Activated naive CD8-positive, alpha-beta T cell treated with anti-CD3 and anti-CD28 coated beads, Interleukin-2, amount 10 ng/mL, durations not matched to agents 7 days and 5 days (primary cell): ENCODE measurements at regions of chr3 and their contacts with region 1.

Region 1: DNA sequence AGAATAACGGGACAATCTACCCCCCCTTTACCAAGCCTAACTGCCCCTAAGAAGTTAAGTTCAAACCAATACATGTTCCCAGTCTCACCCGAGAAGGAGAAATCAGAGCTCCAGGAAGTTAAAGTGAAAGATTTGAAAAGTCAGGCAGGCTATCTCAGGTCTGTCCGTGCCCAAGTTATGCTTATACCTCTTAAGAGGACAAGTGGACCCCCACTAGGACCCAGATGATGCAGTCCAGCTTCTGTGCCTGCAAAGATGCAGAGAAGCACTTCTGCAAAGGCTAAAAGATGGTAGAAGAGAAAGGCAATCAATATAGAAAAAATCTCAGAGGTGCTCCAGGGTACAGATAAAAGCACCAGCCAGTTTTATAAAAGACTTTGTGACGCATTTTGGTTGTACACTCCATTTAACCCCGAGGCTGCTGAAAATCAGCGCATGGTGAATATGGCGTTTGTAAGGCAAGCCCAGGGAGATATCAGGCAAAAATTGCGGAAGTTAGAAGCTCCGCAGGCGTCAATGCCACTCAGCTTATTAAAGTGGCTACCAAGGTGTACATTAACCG is 9.8 kb upstream of the SLC9C1 start:
- DNase-seq: no peak
- ATAC-seq: peak; percentile 51
- H3K4me3 Mint-ChIP-seq: no peak overlapping the region
- H3K27ac Mint-ChIP-seq: no peak overlapping the region
- H3K4me1 Mint-ChIP-seq: peaks cover under 1% of the 10 kb centered on the region
- H3K27me3 Mint-ChIP-seq: no peaks in the 10 kb centered on the region

Region 2: DNA sequence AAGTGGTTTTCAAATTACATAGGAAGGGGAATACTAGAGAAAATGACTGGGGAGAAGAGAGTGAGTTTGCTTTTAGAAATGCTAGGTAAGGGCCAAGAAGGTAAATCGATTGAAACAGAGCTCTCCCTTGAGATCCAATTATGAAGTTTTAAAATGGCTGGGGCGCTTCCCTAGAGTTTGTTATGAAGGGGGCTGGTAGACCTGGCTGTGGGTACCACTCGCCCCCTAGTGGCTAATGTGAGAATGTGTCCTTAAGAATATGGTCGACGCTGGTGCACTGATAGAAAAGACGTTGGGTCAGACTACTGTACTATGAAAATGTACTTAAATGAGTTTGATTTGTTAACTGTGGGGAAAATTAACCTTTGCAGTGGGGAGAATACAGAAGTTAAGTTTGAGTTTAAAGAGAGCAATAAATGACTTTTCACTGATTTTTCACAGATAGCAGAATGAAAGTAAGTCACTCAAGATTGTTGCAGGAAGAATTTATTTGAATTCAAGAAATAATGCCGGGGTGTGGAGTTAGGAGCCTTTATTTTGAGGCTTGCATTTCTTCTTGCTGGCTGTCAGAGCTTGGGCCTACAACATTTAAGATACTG is 260.1 kb before region 1 on chr3:
- POLR2A ChIA-PET with region 1: no interaction called
- DNase-seq: peak; percentile 30
- ATAC-seq: peak; percentile 92
- H3K4me3 Mint-ChIP-seq: no peak overlapping the region
- H3K27ac Mint-ChIP-seq: no peak overlapping the region
- H3K4me1 Mint-ChIP-seq: peaks cover 5% of the 10 kb centered on the region
- H3K27me3 Mint-ChIP-seq: no peaks in the 10 kb centered on the region

Region 3: DNA sequence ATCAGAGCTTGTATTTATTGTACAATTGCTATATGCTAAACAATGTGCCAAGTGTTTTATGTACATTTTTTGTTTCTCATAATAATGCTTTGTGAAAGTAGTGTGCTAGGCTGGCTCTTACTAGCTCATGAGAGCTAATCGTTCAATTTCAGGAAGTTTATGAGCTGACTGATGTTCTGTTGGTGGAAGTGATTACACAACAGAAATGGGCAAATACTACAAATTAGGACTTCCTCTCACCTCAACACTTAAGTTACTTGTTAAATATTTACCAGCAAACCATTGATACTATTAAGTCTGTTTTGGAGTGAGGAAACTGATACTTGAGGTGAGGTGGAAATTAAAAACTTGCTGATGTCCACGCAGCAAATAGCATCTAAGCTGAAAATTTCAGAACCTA is 42.1 kb before region 1 on chr3:
- POLR2A ChIA-PET with region 1: no interaction called
- DNase-seq: no peak
- ATAC-seq: no peak
- H3K4me3 Mint-ChIP-seq: no peak overlapping the region
- H3K27ac Mint-ChIP-seq: no peak overlapping the region
- H3K4me1 Mint-ChIP-seq: no peaks in the 10 kb centered on the region
- H3K27me3 Mint-ChIP-seq: peaks cover 3% of the 10 kb centered on the region

Region 4: GRCh38 chr3:112293368-112294321 is 10.2 kb before region 1 on chr3 and contains the start of gene SLC9C1:
- POLR2A ChIA-PET with region 1: interaction called, 11 read pairs
- DNase-seq: no peak
- ATAC-seq: peak; percentile 79
- H3K4me3 Mint-ChIP-seq: peak within 1 kb of the TSS; percentile 71
- H3K27ac Mint-ChIP-seq: peak within 1 kb of the TSS; percentile 75
- H3K4me1 Mint-ChIP-seq: peaks cover 24% of the 10 kb centered on the region
- H3K27me3 Mint-ChIP-seq: no peaks in the 10 kb centered on the region
- total RNA-seq, gene SLC9C1: not detected

Region 5: GRCh38 chr3:112327371-112327951 is 23.6 kb after region 1 on chr3:
- POLR2A ChIA-PET with region 1: no interaction called
- DNase-seq: no peak
- ATAC-seq: peak; percentile 97
- H3K4me3 Mint-ChIP-seq: no peak overlapping the region
- H3K27ac Mint-ChIP-seq: no peak overlapping the region
- H3K4me1 Mint-ChIP-seq: peaks cover 1% of the 10 kb centered on the region
- H3K27me3 Mint-ChIP-seq: peaks cover 4% of the 10 kb centered on the region